ENCODE measurements at regions of chr9 and their contacts with region 1.

Region 1: DNA sequence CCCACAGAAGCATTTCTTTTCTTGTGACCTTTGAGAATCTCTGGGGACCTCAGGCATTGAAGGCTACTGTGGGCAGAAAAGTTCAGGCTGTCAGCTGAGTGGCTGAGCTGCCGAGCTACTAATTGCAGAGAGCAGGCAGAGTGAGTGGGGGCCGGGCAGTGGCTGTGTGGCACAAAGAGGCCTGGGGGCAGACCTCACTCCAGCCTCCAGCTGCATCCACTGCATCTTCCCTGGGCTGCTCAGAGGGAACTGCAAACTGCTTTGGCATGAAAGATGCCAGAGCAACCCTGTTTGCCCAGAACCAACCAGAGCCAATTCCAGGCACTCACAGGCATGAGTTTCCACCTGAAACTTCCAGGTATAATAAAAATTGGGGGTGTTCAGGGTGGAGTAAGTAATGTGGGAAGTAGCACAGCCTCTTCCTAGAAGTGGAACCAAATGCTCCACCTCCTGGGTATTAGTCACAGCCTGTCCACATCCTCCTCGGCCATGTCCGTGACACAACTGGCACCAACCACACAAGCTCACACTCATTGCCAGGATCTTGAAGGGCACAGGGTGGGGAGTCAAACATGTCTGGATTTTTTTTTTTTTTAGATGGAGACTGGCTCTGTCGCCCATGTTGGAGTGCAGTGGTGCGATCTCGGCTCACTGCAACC is 548.9 kb downstream of the BNC2 start:
- DNase-seq: peak in 1 of 5 donors; percentile 32
- H3K4me3 ChIP-seq: no peak overlapping the region
- H3K27ac ChIP-seq: no peak overlapping the region
- H3K4me1 ChIP-seq: peaks cover 11% of the 10 kb centered on the region
- H3K27me3 ChIP-seq: no peaks in the 10 kb centered on the region
- CTCF ChIP-seq: no peak
- EP300 ChIP-seq: no peak
- POLR2A ChIP-seq: no peak

Region 2: GRCh38 chr9:16484744-16485143 is 163.2 kb after region 1 on chr9:
- intact Hi-C with region 1: no loop called
- DNase-seq: no peak
- H3K4me3 ChIP-seq: no peak overlapping the region
- H3K27ac ChIP-seq: no peak overlapping the region
- H3K4me1 ChIP-seq: peaks cover 8% of the 10 kb centered on the region
- H3K27me3 ChIP-seq: no peaks in the 10 kb centered on the region
- CTCF ChIP-seq: no peak
- EP300 ChIP-seq: no peak
- POLR2A ChIP-seq: no peak

Region 3: DNA sequence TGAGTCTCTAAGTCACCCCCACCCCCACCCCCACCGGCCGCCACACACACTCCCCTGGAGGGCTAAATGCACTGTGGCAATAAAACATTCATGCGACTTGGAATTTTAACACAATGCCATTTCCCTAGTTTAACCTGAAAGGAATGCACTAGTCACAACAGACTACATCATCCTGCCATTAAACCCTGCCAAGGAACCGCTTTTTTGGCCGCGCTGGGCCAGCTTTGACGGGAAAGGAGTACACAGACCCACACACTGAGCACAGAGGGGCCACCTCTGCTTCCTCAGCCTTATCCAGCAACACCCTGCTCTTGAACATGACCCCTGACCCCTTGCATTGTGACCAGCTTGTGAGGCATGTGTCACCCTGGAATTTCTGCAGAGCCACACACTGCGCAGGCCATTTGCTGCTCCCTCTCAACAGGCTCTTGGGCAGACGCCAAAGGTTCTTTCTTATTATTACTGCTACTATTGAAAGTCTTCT is 383.6 kb after region 1 on chr9:
- intact Hi-C with region 1: loop called in 1 of 4 experiments (anchors 10 kb)
- DNase-seq: peak; percentile 76 to 85 (median 79)
- H3K4me3 ChIP-seq: peak overlapping the region; percentile 30
- H3K27ac ChIP-seq: peak overlapping the region in 1 of 2 donors; percentile 81
- H3K4me1 ChIP-seq: peaks cover 9% of the 10 kb centered on the region
- H3K27me3 ChIP-seq: no peaks in the 10 kb centered on the region
- CTCF ChIP-seq: no peak
- EP300 ChIP-seq: peak; percentile 66
- POLR2A ChIP-seq: no peak

Measured in ovary (tissue), 10 donors.